Activated CD4-positive, alpha-beta T cell treated with anti-CD3 and anti-CD28 coated beads, Interleukin-2, amount 10 ng/mL, durations not matched to agents 24 days and 14 days (primary cell): ENCODE measurements at regions of chr6 and their contacts with region 1.

Region 1: DNA sequence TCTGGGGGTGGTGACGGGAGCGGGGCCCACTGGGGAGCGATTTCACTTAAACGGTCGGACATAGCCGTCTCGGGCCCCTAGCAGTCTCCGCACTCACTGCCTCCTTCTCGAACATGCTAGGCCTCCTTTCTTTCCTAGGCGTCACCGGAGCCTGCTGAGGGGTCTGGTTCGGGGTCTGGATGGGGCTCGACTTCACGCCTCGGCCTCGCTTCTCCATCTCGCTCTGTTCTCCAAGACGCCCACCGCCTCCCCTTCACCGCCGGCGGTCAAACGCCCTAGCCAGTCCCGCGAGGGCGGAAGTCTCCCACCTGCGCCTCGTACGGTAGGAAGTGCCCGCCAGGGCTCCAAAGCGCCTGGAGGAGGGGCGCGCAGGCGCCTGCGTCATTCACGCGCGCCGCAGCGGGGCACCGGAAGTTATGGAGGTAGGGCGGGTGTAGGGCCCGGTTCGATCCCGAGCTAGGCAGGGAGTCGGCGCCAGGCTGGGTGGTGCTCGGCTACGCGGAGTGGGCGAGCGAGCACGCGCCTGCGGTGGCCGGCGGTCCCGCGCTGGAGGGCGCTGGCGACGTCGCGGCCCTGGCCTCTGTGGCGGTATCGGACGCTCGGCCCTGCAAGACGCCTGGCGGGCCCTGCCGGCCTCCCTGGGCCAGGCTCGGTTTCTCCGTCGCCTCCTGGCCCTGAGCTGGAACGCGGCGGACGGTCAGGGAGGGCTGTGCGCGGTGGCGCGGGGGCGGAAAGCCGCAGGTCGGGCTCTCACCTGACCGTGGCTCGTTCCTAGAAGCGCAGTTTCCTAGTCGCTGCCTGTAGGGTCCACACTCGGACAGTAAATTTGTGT is at the starts of genes DYNLT2 and ERMARD:
- DNase-seq: peak; percentile 99
- H3K4me3 Mint-ChIP-seq: peak within 1 kb of the TSS; percentile 100
- H3K27ac Mint-ChIP-seq: peak within 1 kb of the TSS; percentile 100
- H3K4me1 Mint-ChIP-seq: peaks cover 28% of the 10 kb centered on the region
- H3K27me3 Mint-ChIP-seq: peaks cover 2% of the 10 kb centered on the region
- total RNA-seq, gene DYNLT2: 2.1 TPM in 2 replicates
- total RNA-seq, gene ERMARD: 26.2 and 27.9 TPM in 2 replicates

Region 2: GRCh38 chr6:169723200-169723909 is 28.1 kb before region 1 on chr6:
- intact Hi-C with region 1: loop called (anchors 1 kb)
- DNase-seq: peak; percentile 89
- H3K4me3 Mint-ChIP-seq: peak overlapping the region; percentile 90
- H3K27ac Mint-ChIP-seq: peak overlapping the region; percentile 94
- H3K4me1 Mint-ChIP-seq: peaks cover 28% of the 10 kb centered on the region
- H3K27me3 Mint-ChIP-seq: peaks cover 5% of the 10 kb centered on the region

Region 3: DNA sequence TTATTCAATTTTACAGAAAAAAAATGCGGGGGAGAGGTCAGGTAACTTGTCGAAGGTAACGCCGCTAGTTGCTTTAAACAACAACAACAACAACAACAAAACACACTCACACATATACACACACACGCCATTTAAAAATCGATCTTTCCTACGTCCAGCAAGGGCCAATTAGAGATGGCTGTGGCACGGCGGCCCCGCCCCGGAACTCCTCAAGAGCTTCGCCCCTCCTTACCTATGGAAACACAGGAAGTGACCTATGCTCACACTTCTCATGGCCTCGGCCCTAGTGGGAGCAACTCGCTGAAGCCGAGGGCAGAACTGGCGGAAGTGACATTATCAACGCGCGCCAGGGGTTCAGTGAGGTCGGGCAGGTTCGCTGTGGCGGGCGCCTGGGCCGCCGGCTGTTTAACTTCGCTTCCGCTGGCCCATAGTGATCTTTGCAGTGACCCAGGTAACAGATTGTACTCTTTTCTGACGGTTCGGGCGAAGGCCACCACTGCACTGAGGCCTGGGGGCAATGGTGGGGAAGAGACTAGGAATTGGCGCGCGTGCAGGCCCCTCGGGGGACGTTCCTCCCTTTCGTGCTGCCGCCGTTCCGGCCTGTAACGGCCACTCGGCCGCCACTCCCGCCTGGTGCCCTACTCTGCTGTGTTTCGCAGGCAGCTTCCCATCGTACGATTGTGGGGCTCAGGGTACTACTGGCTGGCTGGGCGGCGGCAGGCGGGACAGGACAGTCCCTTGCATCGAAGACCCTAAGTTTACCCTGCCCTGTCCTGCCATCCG is 802.7 kb after region 1 on chr6 and contains the start of gene TBP:
- intact Hi-C with region 1: loop called (anchors 1 kb)
- DNase-seq: peak; percentile 99
- H3K4me3 Mint-ChIP-seq: no peak within 1 kb of the TSS
- H3K27ac Mint-ChIP-seq: no peak within 1 kb of the TSS
- H3K4me1 Mint-ChIP-seq: peaks cover 31% of the 10 kb centered on the region
- H3K27me3 Mint-ChIP-seq: no peaks in the 10 kb centered on the region
- total RNA-seq, gene TBP: 28.4 and 29.2 TPM in 2 replicates

Region 4: DNA sequence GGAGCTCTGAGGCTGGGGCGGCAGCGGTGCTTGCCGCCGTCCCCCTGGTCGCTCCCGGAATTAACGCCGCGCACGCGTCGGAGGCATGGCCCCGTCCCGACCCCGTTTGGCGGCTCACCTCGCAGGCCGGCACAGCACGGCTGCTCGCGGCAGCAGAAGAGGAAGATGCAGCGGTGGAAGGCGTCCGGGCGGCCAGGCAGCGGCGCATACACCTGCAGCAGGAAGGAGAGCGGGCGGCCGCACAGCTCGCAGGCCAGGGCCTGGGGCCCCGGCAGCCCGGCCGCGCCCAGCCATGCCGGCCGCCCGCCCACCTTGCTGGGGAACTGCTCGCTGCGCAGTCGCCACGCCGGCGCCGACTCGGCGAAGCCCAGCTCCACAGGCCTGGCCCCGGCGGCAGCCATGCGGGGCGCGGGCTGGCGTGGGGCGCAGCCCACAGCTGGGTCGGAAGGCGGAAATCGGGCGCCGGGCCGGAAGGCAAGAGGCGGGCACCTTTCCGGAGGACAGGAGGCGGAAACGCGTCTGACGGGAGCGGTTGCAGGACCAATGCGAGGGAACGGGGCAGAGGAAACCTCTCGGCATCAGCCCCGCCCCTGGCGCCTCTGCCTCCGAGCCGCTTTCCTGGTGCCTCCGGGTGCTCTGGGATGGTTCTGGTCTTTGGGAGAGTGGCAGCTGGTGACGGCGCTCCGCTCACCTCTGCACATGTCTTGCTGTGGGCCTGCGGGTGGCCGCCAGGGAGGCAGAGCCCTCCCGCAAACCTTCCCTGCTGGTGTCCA is 832.9 kb after region 1 on chr6 and contains the start of gene PDCD2:
- intact Hi-C with region 1: loop called (anchors 2 kb)
- DNase-seq: peak; percentile 98
- H3K4me3 Mint-ChIP-seq: peak within 1 kb of the TSS; percentile 100
- H3K27ac Mint-ChIP-seq: peak within 1 kb of the TSS; percentile 97
- H3K4me1 Mint-ChIP-seq: peaks cover 24% of the 10 kb centered on the region
- H3K27me3 Mint-ChIP-seq: peaks cover 3% of the 10 kb centered on the region
- total RNA-seq, gene PDCD2: 138 and 139 TPM in 2 replicates